CD4-positive, alpha-beta memory T cell (primary cell): ENCODE measurements at regions of chr11 and their contacts with region 1.

Region 1: DNA sequence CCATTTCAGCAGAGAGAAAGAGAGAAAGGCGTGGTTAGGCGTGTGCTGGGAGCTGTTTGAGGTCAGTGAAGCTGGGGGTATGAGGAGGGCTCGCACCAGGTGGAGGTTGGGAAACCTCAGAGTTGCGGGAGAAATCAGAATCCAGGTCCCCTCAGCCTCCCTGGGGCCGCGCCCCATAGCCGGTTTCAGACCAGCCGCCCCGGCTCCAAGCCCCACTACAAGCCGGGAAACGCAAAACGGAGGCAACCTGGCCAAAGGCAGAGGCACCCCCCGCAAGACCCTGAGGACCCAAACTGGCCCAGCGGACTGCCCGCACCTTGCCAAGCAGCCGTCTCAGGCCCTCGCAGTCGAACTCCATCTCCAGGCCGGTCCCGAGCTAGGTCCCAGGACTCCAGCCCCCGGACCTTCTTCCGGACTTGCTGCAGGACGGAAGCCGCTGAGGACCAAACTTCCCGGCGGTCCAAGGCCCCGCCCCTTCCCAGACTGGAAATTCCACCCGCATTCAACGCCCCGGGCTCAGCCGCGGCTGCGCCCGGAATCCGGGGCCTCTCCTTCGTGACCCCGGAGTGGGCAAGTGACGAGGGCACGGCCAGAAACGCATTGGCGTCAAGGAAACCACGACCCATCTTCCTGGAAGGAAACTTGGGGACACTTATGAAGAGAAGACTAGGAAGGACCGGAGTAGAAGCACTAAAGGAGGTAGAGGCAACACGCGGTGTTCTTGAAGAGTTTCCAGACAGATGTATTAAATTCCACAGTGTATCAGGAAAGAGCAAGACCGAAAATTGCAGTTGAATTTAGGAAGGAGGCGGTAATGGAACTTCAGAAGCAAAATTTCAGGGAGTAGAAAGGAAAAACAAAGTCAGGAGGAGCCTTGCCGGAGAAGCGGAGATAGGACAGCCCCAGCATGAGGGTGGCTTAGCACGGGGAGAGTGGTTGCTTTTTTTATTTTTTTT is at the start of gene UEVLD:
- DNase-seq: peak; percentile 45 to 72 (median 48)
- H3K4me3 ChIP-seq: peak within 1 kb of the TSS; percentile 8 to 56
- H3K4me3 Mint-ChIP-seq: no peak within 1 kb of the TSS
- H3K27ac ChIP-seq: peak within 1 kb of the TSS; percentile 91
- H3K27ac Mint-ChIP-seq: no peak within 1 kb of the TSS
- H3K4me1 ChIP-seq: peaks cover 48% of the 10 kb centered on the region
- H3K4me1 Mint-ChIP-seq: peaks cover 0 to 13% (median 11%) of the 10 kb centered on the region in 4 donors
- H3K27me3 ChIP-seq: no peaks in the 10 kb centered on the region
- H3K27me3 Mint-ChIP-seq: no peaks in the 10 kb centered on the region
- total RNA-seq, gene UEVLD: 10.6 to 10.7 TPM

Region 2: DNA sequence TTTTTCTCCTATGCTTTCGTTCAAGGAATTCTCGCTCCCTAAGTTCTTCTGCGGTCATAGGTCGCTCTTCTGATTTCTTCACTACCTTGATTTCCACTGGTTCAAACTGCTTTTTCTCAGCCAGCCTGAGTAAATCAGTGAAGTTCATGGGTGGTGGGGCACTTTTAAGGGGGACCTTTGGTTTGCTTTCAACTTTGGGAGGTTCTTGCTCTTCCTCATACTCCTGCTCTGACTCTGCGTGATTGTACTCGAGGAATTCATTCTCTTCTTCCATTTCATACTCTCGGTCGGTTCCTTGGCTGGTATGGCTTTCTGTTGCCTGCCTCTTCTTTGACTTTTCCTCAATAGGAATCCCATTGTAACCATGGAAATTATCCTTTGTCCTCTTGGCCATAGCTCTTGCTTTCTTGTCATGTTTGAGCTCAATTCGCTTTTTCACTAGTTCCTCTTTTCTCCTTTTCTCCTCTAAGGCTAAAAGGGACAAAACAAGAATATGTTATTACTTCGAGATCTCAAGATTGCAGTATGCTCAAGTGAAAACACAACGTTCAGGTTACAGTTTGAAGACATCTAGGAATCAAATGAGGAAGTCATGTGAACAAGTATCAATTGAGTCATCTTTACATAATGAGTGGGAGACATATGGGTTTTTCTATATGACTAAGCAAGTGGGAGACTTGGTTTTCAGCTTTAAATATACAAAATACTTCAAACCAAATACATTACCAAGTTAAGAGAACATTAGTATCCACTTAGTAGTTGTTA is 27.2 kb after region 1 on chr11:
- CTCF ChIA-PET with region 1: interaction called, 3 read pairs
- POLR2A ChIA-PET with region 1: interaction called, 16 read pairs
- intact Hi-C with region 1: loop called (anchors 1 kb)
- DNase-seq: no peak
- H3K4me3 ChIP-seq: no peak overlapping the region
- H3K4me3 Mint-ChIP-seq: peak overlapping the region in 5 of 8 donors; percentile 1 to 43 (median 15)
- H3K27ac ChIP-seq: no peak overlapping the region
- H3K27ac Mint-ChIP-seq: peak overlapping the region in 4 of 7 donors; percentile 63 to 90 (median 70)
- H3K4me1 ChIP-seq: peaks cover 48% of the 10 kb centered on the region
- H3K4me1 Mint-ChIP-seq: peaks cover 31 to 61% (median 42%) of the 10 kb centered on the region in 4 donors
- H3K27me3 ChIP-seq: no peaks in the 10 kb centered on the region
- H3K27me3 Mint-ChIP-seq: no peaks in the 10 kb centered on the region

Region 3: DNA sequence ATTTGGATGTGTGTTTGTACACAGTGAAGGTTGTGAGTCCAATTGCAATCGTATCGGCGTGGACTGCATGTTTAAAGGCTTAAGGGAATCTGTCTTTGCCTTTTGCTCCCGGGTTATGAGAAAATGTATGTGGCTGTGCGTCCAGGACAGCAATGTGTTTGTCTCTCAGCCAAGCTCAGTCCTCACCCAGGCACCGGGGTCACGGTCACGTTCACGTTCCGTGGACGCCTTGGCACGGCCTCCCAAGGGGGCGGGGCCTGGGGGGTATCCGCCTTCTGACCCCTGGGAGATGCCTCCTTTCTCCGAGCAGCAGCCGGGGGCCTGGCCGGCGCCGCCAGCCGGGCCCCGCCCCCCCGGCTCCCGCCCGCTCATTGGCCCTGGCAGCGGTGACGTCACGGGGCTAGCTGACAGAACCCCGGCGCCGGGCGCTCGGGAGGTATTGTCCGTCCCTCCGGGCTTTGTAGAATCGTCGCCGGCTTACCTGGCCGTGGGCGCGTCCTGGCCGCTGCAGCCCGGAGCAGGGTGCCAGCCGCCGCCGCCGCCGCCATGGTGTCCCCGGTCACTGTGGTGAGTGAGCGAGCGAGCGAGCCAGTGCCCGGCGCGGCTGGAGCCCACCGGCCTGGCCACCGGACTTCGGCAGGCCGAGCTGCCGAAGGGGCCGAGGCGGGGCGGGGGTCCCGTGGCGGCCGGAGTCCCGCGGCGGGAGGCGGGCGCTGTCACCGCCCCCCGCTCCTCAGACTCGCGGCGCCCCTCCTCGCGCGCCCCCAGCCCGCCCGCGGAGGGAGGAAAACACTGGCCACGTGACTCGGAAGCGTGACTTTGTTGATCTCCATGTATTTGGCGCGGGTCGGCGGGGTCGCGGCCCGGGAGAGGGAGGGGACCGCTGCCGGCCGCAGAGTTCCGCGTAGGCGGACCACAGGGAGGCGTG is 110.0 kb after region 1 on chr11 and contains the start of gene TMEM86A:
- CTCF ChIA-PET with region 1: no interaction called
- POLR2A ChIA-PET with region 1: no interaction called
- intact Hi-C with region 1: loop called (anchors 5 kb)
- DNase-seq: peak; percentile 87 to 91 (median 88)
- H3K4me3 ChIP-seq: peak within 1 kb of the TSS in 1 of 2 donors; percentile 64
- H3K4me3 Mint-ChIP-seq: peak within 1 kb of the TSS; percentile 79 to 88 (median 84)
- H3K27ac ChIP-seq: peak within 1 kb of the TSS; percentile 63
- H3K27ac Mint-ChIP-seq: peak within 1 kb of the TSS; percentile 64 to 95 (median 92)
- H3K4me1 ChIP-seq: peaks cover 15% of the 10 kb centered on the region
- H3K4me1 Mint-ChIP-seq: peaks cover 12 to 22% (median 17%) of the 10 kb centered on the region in 4 donors
- H3K27me3 ChIP-seq: no peaks in the 10 kb centered on the region
- H3K27me3 Mint-ChIP-seq: no peaks in the 10 kb centered on the region
- total RNA-seq, gene TMEM86A: 2.5 to 4.0 TPM